ENCODE measurements at regions of chr16 and their contacts with region 1.

Region 1: DNA sequence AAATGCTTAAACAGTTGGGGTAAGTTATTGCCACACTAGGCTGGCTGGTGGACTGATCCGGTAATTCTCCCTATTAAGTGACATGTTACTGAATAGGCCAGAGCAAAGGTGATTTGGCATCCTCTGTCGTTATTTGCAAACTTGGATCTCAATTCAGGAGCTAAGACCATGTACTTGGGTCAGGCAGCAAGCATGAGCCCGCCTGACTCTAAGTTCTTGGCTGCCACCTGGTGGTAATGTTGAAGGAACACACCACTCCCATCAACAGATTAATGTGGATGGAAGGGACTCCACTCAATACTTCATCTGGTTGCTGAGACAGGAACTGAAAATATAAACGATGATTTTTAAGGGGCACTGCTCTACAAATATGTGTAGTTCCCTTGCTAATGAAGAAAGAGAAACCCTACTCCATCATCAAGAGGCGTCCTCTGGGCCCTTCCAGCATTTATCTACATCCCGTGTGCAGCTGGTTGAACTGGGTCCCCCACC is 70.8 kb downstream of the EMP2 start:
- DNase-seq: peak; percentile 31 to 38
- ATAC-seq: peak; percentile 96

Region 2: GRCh38 chr16:10256784-10257641 is 252.6 kb before region 1 on chr16:
- intact Hi-C with region 1: loop called in 1 of 2 experiments (anchors 2 kb)
- DNase-seq: peak in 1 of 2 donors; percentile 31
- ATAC-seq: peak; percentile 73

Region 3: DNA sequence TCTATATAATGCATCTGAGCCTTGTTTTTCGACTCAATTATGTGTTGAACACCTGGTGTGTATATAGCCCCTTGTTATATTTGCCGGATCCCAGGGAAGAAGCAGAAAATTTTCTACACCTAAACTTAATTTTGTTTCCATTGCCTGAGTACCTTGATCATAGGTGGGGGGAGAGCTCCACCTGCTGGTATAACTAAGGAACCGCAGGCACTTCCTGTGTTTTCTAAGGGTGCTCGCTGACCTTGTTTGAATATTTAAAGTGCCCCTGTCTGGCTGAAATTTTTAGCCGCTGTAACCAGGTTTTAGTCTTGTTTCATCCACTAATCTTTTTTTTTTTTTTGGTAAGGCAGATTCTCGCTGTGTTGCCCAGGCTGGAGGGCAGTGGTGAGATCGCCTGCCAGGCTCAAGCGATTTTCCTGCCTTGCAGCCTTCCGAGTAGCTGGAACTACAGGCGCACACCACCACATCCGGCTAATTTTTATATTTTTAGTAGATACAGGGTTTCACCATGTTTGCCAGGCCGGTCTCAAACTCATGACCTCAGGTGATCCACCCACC is 227.6 kb after region 1 on chr16:
- intact Hi-C with region 1: loop called in 1 of 2 experiments (anchors 2 kb)
- DNase-seq: peak; percentile 35 to 51
- ATAC-seq: peak; percentile 86

Region 4: DNA sequence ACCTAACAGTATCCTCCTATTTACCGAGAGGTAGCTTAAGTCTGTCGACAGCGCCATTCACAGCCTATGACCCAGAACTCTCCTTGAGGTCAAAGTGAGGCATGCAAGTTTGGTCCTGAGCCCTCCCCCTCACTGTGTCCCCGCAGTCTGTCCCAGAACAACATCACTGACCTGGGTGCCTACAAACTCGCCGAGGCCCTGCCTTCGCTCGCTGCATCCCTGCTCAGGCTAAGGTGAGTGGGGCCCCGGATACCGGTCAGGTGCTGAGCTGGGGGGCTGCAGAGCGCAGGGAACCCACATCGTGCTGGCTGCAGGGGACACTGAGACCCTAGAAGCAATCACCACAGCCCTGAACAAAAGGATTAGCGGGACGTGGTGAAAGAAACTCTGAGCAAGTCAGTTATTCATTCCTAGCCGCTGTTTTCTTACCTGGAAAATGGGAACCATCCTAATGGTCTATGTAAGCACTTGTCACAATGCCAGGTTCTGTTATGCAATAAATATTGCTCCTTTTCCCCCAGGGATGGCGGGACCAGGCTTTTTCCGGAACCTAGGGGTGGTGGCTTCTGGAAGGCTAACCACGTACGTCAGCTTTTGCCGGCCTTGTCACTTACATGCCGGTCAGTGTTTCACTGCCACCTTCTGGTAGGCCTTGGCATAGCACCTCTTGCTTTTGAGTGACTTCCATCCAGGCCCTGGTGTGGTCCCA is 408.9 kb after region 1 on chr16:
- intact Hi-C with region 1: loop called in 1 of 2 experiments (anchors 10 kb)
- DNase-seq: peak; percentile 82 to 93
- ATAC-seq: peak; percentile 92

Region 5: DNA sequence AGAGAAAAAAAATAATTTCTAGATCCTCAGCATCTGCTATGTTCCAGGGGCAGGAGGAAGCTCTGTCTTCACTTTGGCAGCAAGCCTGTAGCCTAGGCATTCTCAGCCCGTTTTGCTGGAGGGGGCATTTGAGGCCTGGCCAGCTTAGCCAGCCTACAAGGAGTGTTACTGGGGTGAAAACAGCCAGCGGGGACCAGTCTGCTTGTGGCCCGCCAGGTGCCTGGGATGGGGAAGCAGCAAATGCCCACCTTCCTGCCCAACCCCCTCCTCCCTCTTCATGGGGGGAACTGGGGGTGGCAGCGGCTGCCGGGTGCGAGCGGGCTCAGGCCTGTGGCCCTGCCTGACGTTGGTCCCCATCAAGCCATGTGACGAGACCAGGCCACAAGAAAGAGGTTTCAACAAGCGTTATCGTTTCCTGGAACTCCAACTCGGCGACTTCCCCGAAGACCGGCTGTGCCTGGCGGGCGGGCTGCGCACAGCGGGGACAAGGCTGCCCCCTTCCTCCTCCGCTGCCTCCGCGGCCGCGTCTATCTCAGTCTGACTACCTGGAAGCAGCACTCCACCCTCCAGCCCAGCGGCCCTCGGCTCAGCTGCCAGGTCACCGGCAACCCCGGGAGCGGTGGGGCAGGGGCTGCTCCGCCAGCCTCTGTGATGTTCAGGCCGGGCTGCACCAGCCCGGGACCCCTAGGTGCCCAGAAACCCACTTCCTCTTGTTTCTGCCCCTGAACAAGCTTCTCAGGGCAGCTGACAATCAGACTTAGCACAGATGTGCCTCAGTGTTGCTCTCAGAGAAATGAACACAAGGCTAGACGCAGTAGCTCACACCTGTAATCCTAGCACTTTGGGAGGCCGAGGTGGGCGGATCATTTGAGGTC is 723.5 kb after region 1 on chr16:
- intact Hi-C with region 1: no loop called
- DNase-seq: peak; percentile 49 to 55
- ATAC-seq: peak; percentile 16